Endothelial cell of umbilical vein (primary cell): ENCODE measurements at regions of chr21 and their contacts with region 1.

Region 1: GRCh38 chr21:43938751-43939442 is 73.2 kb upstream of the TRAPPC10 start:
- DNase-seq: peak; percentile 68
- H3K4me3 ChIP-seq: peak overlapping the region; percentile 20 to 59 (median 27)
- H3K27ac ChIP-seq: peak overlapping the region; percentile 42
- H3K4me1 ChIP-seq: peaks cover 5% of the 10 kb centered on the region
- H3K27me3 ChIP-seq: no peaks in the 10 kb centered on the region
- CTCF ChIP-seq: peak; percentile 99 to 100
- POLR2A ChIP-seq: no peak

Region 2: GRCh38 chr21:43893536-43894205 is 45.2 kb before region 1 on chr21:
- CTCF ChIA-PET with region 1: interaction called, 10 read pairs
- POLR2A ChIA-PET with region 1: no interaction called
- dilution Hi-C with region 1: no loop called
- intact Hi-C with region 1: loop called (anchors 5 kb)
- DNase-seq: peak; percentile 88
- H3K4me3 ChIP-seq: peak overlapping the region in 2 of 3 experiments; percentile 33 to 58
- H3K27ac ChIP-seq: peak overlapping the region; percentile 82
- H3K4me1 ChIP-seq: peaks cover 24% of the 10 kb centered on the region
- H3K27me3 ChIP-seq: no peaks in the 10 kb centered on the region
- CTCF ChIP-seq: no peak
- POLR2A ChIP-seq: peak; percentile 65